GM10248 (cell line): ENCODE measurements at regions of chr6 and their contacts with region 1.

Region 1: GRCh38 chr6:35601331-35602132 is 87.2 kb downstream of the FKBP5 start:
- DNase-seq: peak; percentile 15
- CTCF ChIP-seq: no peak

Region 2: GRCh38 chr6:35583893-35584688 is 17.4 kb before region 1 on chr6:
- CTCF ChIA-PET with region 1: interaction called, 24 read pairs
- POLR2A ChIA-PET with region 1: no interaction called
- DNase-seq: peak; percentile 53
- CTCF ChIP-seq: peak; percentile 71

Region 3: DNA sequence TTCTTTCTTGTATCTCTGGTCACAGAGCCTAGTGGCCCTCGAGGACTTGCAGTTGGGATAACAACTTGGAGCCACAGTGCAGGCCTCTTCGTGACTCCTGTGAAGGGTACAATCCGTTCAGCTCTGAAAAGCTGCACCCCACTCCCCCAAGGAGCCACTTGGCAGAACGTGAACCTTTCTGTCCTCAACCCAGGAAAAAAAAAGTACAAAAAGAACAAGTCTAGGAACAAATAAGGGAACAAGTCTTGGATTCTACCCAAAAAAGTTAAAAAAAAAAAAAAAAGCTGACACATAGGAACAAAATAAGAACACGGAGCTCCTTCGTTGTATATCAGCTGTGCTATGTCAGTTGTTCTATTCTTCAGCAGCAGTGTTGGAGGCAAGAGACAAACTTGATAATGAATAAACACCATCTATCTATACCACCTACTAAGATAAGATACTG is 10.9 kb before region 1 on chr6:
- CTCF ChIA-PET with region 1: interaction called, 24 read pairs
- POLR2A ChIA-PET with region 1: no interaction called
- DNase-seq: no peak
- CTCF ChIP-seq: no peak

Region 4: DNA sequence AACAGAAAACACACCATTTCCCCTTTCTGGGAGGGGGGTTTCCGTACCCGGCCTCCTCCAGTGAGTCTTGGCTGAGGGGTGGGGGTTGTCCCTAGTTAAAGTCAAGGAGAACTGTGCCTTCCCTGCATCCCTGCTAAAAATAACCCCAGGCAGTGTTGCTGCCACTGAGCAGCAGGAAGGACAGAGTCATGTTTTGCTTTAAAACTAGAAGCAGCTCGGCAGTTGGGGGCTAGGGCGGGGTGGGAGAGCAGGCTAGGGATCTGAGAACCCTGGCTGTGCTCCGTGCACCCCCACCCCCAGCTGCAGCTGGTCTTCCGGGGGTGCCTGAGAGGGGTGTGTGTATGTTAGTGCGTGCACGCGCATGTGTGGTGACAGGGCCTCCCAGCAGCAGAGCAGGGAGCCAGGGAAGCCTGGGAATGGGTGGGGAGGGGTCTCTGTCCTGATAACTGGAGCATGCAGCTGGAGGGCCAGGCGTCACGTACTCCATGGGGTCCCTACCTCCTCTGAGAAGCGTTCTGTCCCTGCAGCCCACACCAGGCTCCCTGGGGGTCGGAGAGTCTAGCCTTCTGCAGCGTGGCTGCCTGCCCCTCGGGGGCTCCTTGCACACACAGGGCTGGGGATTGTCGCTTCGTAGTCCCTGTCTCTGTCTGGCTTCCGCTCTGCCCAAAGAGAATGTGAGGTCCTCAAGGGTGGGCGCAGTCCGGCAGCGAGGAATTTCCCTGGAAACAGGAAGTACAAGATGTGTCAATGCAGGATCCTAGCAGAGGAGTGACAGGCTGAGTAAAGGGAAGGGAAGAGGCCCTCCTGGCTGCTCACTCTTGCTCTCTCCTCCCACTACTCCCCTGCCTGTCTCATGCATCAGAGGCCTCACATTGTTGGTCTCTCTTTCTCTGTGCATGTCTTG is 118.5 kb after region 1 on chr6:
- CTCF ChIA-PET with region 1: no interaction called
- POLR2A ChIA-PET with region 1: no interaction called
- DNase-seq: peak; percentile 79
- CTCF ChIP-seq: no peak

Region 5: GRCh38 chr6:35980991-35981660 is 379.6 kb after region 1 on chr6:
- CTCF ChIA-PET with region 1: no interaction called
- POLR2A ChIA-PET with region 1: no interaction called
- DNase-seq: no peak
- CTCF ChIP-seq: no peak